Activated naive CD4-positive, alpha-beta T cell treated with anti-CD3 and anti-CD28 coated beads for 36 hours (primary cell): ENCODE measurements at regions of chr14 and their contacts with region 1.

Region 1: GRCh38 chr14:73713803-73714655 is at the start of gene PNMA1:
- DNase-seq: peak; percentile 84
- H3K4me3 Mint-ChIP-seq: peak within 1 kb of the TSS; percentile 99
- H3K27ac Mint-ChIP-seq: peak within 1 kb of the TSS; percentile 85
- H3K4me1 Mint-ChIP-seq: peaks cover 13% of the 10 kb centered on the region
- H3K27me3 Mint-ChIP-seq: no peaks in the 10 kb centered on the region
- total RNA-seq, gene PNMA1: 18.5 to 19.2 TPM

Region 2: DNA sequence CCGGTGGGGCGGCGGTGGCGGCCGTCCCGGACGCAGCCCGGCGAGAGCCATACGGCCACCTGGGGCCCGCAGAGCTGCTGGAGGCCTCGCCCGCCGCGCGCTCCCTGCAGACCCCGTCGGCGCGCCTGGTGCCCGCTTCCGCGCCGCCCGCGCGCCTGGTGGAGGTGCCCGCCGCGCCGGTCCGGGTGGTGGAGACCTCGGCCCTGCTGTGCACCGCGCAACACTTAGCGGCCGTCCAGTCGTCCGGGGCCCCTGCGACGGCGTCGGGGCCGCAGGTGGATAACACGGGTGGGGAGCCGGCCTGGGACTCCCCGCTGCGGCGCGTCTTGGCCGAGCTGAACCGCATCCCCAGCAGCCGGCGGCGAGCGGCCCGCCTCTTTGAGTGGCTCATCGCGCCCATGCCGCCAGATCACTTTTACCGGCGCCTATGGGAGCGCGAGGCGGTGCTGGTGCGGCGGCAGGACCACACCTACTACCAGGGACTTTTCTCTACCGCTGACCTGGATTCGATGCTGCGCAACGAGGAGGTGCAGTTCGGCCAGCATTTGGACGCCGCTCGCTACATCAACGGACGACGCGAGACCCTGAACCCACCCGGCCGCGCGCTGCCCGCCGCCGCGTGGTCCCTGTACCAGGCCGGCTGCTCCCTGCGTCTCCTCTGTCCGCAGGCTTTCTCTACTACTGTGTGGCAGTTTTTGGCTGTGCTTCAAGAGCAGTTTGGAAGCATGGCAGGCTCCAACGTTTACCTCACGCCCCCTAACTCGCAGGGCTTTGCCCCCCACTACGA is 222.6 kb before region 1 on chr14:
- CTCF ChIA-PET with region 1: no interaction called
- intact Hi-C with region 1: loop called (anchors 2 kb)
- DNase-seq: peak; percentile 74
- H3K4me3 Mint-ChIP-seq: peak overlapping the region; percentile 78
- H3K27ac Mint-ChIP-seq: no peak overlapping the region
- H3K4me1 Mint-ChIP-seq: peaks cover 42% of the 10 kb centered on the region
- H3K27me3 Mint-ChIP-seq: no peaks in the 10 kb centered on the region

Region 3: DNA sequence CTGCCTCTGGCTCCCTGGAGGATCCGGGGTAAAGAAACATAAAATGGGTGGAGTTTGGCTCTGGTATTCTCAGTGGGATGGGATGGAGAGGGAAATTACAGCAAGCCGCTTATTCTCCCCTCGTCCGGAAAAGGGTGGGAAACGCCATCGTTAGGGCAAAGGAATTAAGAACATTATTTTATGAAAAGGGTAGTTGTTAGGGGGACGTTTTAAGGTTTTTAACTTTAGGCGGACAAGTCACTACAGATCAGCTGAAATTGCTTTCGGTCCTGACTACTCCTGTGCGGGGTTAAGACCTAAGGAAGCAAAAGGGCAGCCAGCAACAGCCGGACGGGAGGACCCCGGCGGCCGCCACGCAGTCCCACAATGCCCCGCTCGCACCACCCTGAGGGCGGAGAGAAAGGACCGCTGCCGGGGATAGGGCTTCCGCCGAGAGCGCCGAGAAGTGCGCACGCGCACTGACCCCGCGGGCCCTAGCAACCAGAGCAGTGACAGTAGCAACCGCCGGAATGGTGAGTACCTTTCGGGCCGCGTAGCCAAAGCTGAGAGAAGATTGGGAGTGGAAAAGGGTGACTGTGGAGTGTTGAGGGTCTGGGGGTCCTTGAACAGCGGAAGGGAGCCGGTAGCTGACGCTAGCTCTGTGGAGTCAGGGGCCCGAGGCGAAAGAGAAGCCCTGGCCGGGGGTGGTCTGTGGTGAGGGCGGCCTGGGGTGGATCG is 69.3 kb before region 1 on chr14 and contains the start of gene DNAL1:
- CTCF ChIA-PET with region 1: no interaction called
- intact Hi-C with region 1: loop called (anchors 5 kb)
- DNase-seq: peak; percentile 93
- H3K4me3 Mint-ChIP-seq: peak within 1 kb of the TSS; percentile 92
- H3K27ac Mint-ChIP-seq: peak within 1 kb of the TSS; percentile 86
- H3K4me1 Mint-ChIP-seq: peaks cover 17% of the 10 kb centered on the region
- H3K27me3 Mint-ChIP-seq: no peaks in the 10 kb centered on the region
- total RNA-seq, gene DNAL1: 4.4 TPM

Region 4: DNA sequence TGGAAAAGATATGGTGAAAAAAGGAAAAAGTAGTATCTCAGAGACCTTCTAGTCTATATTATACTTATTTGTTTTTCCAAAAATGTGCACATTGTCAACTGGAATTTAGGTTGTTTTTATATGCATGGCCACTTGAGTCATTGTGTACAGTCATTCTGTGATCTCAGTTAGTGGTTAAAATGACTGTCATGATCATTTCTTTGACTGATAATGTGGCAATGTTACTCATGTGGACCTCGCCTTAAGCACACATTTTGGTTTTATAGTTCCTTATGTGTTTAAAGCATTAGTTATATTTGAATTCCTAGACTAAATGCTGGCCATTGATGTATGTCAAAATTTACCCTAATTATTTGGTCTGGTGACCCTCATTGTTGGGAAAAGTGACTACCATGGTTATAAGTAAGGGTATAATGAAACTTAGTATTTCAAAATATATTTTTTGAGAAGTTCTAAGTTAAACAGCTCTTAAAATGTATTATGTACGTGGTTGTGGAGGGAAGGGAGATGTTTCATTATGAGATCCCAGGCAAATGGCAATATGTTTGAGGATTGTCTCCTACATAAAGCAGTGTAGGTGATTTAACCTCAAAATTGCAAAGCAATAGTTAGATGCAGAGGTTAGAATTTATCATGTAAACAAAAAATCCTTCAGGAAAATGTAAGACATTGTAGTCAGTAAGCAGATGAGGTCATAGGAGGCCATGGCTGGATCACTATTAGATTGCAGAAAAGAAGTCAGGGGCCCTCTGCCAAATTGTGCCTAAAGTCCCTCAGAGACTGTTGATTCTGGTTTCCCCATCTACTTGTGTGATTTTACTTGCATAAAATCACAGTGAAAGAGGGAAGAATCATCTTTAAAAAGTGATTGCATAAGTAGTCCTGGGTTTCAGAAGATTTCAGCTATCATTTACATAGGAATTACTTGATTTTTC is 17.3 kb before region 1 on chr14:
- CTCF ChIA-PET with region 1: no interaction called
- intact Hi-C with region 1: loop called (anchors 1 kb)
- DNase-seq: no peak
- H3K4me3 Mint-ChIP-seq: peak overlapping the region; percentile 29
- H3K27ac Mint-ChIP-seq: peak overlapping the region; percentile 86
- H3K4me1 Mint-ChIP-seq: peaks cover 44% of the 10 kb centered on the region
- H3K27me3 Mint-ChIP-seq: no peaks in the 10 kb centered on the region

Region 5: DNA sequence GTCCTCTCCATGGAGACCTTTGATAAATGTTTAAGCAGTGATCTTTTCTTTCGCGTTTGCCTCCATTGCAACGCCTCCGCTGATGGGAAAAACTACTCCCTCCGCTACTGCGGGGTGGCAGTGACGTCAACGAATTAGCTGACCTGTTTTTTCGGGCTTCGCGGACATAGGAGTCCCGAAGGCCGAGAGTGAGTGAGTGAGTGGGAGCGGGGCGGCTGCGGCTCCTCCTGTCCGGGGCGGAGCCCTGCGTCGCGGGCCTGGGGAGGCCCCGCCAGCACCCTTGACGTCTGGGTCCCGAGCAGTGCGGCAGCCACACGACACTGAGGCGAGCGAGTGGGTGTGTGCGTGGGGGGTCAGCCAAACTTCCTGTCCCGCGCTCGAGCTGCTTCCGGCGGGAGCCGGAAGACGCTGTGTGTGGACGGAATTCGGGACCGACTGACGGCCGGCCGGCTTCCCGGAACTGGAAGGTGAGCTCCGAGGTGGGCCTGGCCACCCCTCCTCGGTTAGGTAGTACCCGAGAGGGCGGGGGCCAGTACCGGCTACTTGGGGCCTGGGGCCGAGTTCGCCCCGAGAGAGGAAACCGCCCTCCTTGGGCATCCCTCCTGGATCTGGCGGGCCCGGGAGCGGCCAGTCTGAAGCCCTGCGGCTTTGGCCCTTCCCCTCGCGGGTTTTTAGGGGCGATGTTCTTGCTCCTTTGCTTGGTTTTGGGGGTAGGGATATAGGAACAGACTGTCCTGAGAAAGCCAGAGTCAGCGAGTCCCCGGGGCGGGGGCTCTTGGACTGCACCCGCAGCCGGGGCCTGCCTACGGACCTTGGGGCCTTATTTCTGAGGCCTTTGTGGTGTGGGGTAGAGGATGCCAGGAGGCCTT is 172.7 kb after region 1 on chr14 and contains the start of gene ZNF410:
- CTCF ChIA-PET with region 1: no interaction called
- intact Hi-C with region 1: loop called (anchors 1 kb)
- DNase-seq: peak; percentile 95
- H3K4me3 Mint-ChIP-seq: peak within 1 kb of the TSS; percentile 88
- H3K27ac Mint-ChIP-seq: peak within 1 kb of the TSS; percentile 94
- H3K4me1 Mint-ChIP-seq: peaks cover 46% of the 10 kb centered on the region
- H3K27me3 Mint-ChIP-seq: no peaks in the 10 kb centered on the region
- total RNA-seq, gene ZNF410: 51.0 to 56.8 TPM

Region 6: DNA sequence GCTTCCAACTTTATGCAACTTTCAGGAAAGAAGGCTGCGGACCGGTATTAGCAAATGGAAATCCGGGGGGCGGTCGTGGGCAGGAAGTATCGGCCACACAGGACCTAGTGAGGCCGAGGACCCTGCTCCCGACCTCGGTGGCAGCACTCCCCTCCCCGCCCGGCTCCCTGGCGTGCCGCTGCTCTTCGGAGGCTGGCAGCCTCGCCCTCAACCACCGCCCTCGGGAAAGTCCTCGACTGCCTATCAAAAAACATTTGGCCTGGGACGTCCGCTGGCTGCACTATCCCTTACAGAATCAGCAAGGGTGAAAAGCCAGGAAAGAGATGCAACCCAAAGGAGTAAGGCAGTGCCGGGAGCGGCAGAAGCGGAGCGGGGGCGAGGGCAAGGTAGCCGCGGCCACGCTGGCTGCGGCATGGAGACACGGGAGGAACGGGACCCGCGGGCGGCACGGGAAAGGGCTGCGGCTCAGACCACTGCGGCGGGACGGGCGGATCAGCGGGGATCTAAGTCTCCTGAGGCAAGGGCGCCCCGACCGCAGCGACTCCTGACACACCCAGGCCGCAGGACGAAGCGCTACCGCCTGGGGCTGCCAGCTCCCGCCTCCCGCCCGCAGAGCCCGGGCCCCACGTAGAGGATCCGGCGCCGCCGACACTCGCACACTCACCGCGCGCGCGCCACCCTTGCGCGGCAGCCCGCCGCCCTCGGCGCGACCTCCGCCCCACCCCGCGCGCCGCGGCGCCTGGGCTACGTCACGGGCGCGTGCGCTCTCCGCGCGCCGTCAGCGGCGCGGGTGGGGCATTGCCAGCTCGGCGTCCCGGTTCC is 304.8 kb after region 1 on chr14 and contains the starts of genes BBOF1 and ENTPD5:
- CTCF ChIA-PET with region 1: no interaction called
- intact Hi-C with region 1: loop called (anchors 10 kb)
- DNase-seq: peak; percentile 80
- H3K4me3 Mint-ChIP-seq: peak within 1 kb of the TSS; percentile 86
- H3K27ac Mint-ChIP-seq: peak within 1 kb of the TSS; percentile 90
- H3K4me1 Mint-ChIP-seq: peaks cover 13% of the 10 kb centered on the region
- H3K27me3 Mint-ChIP-seq: no peaks in the 10 kb centered on the region
- total RNA-seq, gene BBOF1: 1.3 to 1.7 TPM
- total RNA-seq, gene ENTPD5: 7.3 to 9.6 TPM

Region 7: DNA sequence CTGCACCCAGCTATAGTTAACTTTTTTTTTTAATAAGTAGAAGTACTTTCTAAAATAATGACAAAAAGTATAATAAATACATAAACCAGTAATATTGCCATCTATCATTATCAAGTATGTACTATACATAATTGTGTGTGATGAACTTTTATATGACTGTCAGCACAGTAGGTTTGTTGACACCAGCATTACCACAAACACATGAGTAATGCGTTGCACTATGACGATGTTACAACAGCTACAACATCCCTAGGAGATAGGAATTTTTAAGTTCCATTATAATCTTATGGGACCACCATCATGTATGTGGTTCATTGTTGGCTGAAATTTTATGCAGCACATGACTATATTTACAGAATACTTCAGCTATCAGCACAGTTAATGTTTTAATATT is 462.4 kb after region 1 on chr14:
- CTCF ChIA-PET with region 1: no interaction called
- intact Hi-C with region 1: no loop called
- DNase-seq: no peak
- H3K4me3 Mint-ChIP-seq: no peak overlapping the region
- H3K27ac Mint-ChIP-seq: no peak overlapping the region
- H3K4me1 Mint-ChIP-seq: no peaks in the 10 kb centered on the region
- H3K27me3 Mint-ChIP-seq: no peaks in the 10 kb centered on the region